Posterior vena cava (tissue), 2 donors: ENCODE measurements at regions of chr2 and their contacts with region 1.

Region 1: DNA sequence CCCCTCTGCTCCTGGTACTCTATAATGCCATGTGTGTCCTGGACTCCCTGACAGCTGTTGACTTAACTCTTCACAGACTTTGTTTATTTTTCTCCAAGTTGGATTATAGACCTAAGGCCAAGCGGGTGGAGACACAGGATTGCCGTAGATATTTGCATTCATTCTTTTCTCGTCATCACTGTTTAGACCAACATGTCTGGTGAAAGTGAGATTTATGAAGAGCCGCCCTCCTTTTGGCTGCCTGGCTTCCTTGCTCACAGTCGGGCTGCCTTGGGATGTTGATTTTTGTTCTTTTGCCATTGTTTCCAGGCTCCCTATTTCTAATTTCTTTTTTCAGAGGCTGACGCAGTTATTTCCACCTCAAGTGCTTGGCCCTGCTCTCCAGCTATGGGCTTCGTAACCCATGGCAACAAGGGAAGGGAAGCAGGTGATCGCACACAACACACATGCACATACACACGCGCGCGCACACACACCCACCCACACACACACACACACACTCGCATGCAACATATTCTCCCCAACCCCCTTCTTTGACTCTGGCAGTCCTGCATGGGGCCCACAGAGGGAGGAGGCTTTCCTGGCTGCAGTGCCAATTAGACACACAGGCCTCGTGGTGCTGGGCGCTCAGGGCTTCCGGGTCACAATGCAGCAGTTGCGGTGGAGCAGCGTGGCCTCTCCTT is 296.5 kb downstream of the MTX2 start:
- DNase-seq: peak; percentile 77

Region 2: DNA sequence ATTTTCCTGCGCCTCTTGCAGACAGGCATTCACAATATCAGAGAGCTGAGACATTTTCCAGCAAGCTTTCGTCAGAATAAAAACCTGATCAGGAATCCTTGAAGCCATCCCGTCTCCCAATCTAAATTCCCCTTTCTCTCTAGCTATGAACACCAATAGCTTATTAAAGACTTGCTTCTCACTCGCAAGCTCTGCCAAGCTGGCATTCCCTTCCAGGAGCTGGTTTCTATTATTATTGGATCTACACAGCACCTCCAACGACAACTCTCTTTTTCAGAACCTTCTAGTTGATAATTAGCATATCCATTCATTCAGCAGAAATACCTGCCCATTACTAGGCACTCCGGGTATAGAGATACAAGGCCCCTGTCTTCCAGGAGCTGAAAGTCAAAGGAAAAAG is 53.7 kb after region 1 on chr2:
- intact Hi-C with region 1: loop called in 1 of 2 experiments (anchors 1 kb)
- DNase-seq: no peak

Region 3: GRCh38 chr2:176638167-176639015 is 72.6 kb after region 1 on chr2:
- intact Hi-C with region 1: loop called in 1 of 2 experiments (anchors 10 kb)
- DNase-seq: peak; percentile 91